CD4-positive, alpha-beta T cell (primary cell): ENCODE measurements at regions of chr9 and their contacts with region 1.

Region 1: GRCh38 chr9:129482521-129483414 is 138.1 kb downstream of the C9orf50 start:
- DNase-seq: peak in 9 of 14 experiments; percentile 13 to 65 (median 49)
- ATAC-seq: peak; percentile 31
- H3K4me3 ChIP-seq: peak overlapping the region; percentile 45
- H3K4me3 Mint-ChIP-seq: peak overlapping the region; percentile 78
- H3K27ac ChIP-seq: peak overlapping the region in 1 of 2 donors; percentile 65
- H3K27ac Mint-ChIP-seq: peak overlapping the region; percentile 39
- H3K4me1 ChIP-seq: peaks cover 52% of the 10 kb centered on the region
- H3K4me1 Mint-ChIP-seq: peaks cover 31% of the 10 kb centered on the region
- H3K27me3 ChIP-seq: peaks cover 0 to 2% of the 10 kb centered on the region in 2 experiments
- H3K27me3 Mint-ChIP-seq: no peaks in the 10 kb centered on the region
- CTCF ChIP-seq: no peak

Region 2: DNA sequence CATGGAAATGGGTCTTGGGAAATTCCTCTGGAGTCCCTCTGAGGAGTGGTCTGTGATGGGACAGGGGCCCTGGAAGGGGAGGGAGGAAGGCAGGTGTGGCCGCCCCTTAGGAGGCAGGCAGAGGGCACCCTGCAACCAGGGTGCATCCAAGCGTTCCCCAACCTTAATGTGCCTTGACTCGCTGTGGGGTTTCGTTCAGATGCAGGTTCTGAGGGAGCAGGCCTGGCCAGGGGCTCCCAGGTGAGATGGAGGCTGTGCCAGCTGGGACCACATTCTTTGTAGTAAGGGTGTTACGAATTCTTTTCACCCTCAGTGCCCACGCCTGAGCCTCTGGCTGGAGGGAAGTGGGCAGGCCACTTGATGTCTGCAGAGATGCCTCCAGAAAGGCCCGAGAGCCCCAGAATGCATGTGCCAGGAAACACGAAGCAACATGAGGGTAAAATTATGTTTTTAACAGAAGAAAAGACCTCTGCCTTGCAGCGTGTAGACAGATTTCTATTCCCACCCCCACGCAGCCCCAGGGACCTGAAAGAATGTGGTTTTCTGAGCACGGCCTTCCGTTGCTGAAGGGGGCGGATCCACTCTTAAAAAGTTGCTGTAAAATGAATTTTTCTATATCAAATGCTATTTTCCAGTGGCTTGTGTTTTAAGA is 154.3 kb before region 1 on chr9:
- CTCF ChIA-PET with region 1: no interaction called
- POLR2A ChIA-PET with region 1: no interaction called
- intact Hi-C with region 1: loop called in 1 of 2 experiments (anchors 5 kb)
- DNase-seq: peak in 4 of 14 experiments; percentile 9 to 59 (median 24)
- ATAC-seq: peak; percentile 65
- H3K4me3 ChIP-seq: no peak overlapping the region
- H3K4me3 Mint-ChIP-seq: peak overlapping the region; percentile 23
- H3K27ac ChIP-seq: no peak overlapping the region
- H3K27ac Mint-ChIP-seq: peak overlapping the region; percentile 50
- H3K4me1 ChIP-seq: peaks cover 17% of the 10 kb centered on the region
- H3K4me1 Mint-ChIP-seq: peaks cover 21% of the 10 kb centered on the region
- H3K27me3 ChIP-seq: no peaks in the 10 kb centered on the region
- H3K27me3 Mint-ChIP-seq: no peaks in the 10 kb centered on the region
- CTCF ChIP-seq: no peak

Region 3: GRCh38 chr9:129436751-129437625 is 45.8 kb before region 1 on chr9:
- CTCF ChIA-PET with region 1: no interaction called
- POLR2A ChIA-PET with region 1: no interaction called
- intact Hi-C with region 1: loop called in 1 of 2 experiments (anchors 10 kb)
- DNase-seq: peak in 11 of 14 experiments; percentile 31 to 75 (median 45)
- ATAC-seq: peak; percentile 75
- H3K4me3 ChIP-seq: peak overlapping the region; percentile 59
- H3K4me3 Mint-ChIP-seq: peak overlapping the region; percentile 92
- H3K27ac ChIP-seq: no peak overlapping the region
- H3K27ac Mint-ChIP-seq: peak overlapping the region; percentile 13
- H3K4me1 ChIP-seq: peaks cover 23% of the 10 kb centered on the region
- H3K4me1 Mint-ChIP-seq: peaks cover 26% of the 10 kb centered on the region
- H3K27me3 ChIP-seq: peaks cover 20 to 21% of the 10 kb centered on the region in 2 experiments
- H3K27me3 Mint-ChIP-seq: peaks cover 59% of the 10 kb centered on the region
- CTCF ChIP-seq: no peak

Region 4: DNA sequence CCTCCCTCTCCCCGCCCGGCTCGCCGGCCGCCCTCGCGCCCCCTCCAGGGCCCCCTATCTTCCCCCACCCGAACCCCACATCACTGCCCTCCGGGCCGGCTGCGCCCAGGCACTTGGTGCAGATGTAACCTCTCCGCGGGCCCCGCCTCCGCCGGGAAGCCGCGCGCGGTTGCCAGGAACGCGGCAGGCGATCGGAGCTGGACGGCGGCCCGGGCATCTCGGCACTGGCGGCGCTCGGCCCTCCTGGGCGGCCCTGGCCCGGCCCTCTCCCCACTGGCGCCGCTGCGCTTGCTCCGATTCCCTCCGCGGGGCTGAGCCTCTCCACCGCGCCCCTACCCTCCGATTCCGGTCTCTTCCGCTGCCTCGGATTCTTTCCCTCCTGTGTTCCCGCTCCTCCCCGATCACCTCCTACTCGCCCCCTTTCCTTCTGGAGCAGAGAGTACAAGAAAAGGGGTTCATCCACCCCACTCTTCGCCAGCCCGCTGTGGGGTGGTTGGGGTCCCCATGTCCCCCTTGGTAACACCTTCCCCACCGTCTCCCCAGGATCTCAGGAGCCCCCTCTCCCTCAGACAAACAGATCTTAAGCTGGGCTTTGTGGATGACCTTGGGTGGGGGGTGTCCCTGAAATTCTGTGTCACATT is 67.6 kb after region 1 on chr9:
- CTCF ChIA-PET with region 1: no interaction called
- POLR2A ChIA-PET with region 1: no interaction called
- intact Hi-C with region 1: no loop called
- DNase-seq: peak in 3 of 14 experiments; percentile 13 to 33 (median 30)
- ATAC-seq: peak; percentile 32
- H3K4me3 ChIP-seq: no peak overlapping the region
- H3K4me3 Mint-ChIP-seq: peak overlapping the region; percentile 30
- H3K27ac ChIP-seq: no peak overlapping the region
- H3K27ac Mint-ChIP-seq: no peak overlapping the region
- H3K4me1 ChIP-seq: peaks cover 5% of the 10 kb centered on the region
- H3K4me1 Mint-ChIP-seq: peaks cover 5% of the 10 kb centered on the region
- H3K27me3 ChIP-seq: peaks cover 23 to 35% of the 10 kb centered on the region in 2 experiments
- H3K27me3 Mint-ChIP-seq: peaks cover 50% of the 10 kb centered on the region
- CTCF ChIP-seq: no peak